ENCODE measurements at regions of chr1 and their contacts with region 1.

Region 1: DNA sequence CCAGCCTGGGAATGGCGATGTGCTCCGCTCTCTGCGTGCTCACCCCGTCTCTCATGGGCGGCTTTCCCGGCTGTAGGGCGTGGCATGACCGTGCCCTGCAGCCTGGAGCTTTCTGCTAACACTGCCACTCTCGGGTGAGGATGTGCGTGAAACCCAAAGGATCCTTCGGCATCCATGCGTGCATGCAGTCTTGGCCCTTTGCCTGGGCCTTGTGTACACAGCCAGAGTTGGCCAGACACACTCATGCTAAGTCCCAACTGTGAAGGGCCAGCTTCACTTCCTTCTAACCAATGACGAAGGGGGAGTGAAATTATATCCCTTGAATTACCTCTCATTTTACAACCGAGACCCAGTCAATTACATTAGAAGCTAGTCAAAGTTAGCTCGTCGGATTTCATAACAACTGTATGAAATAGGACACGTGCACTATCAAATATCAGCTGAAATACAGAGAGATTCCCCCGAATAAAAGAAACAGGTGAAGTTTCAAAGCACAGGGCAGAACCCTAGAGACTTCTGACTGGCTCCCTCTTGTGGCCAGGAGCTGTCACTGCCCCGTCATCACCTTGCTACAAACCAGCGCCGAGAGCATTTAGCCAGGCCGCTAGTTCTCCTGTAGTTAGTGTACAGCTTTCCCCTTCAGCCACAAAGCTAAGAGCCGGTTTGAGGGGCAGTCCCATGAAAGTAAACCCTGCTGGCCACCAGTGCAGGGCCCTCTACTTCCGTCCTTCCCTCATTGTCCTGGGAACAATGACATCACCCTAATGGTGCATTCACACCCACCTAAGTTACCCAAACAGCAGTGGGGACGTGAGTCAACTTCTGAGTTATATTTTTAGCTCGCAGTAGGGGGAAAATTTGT is 63.4 kb upstream of the COA6 start:
- DNase-seq: no peak
- ATAC-seq: peak; percentile 93
- H3K4me3 ChIP-seq: no peak overlapping the region
- H3K27ac ChIP-seq: no peak overlapping the region
- H3K4me1 ChIP-seq: peaks cover 10% of the 10 kb centered on the region
- H3K27me3 ChIP-seq: no peaks in the 10 kb centered on the region; a peak in 1 of 4 replicates
- CTCF ChIP-seq: peak; percentile 88 to 93 (median 91)
- EP300 ChIP-seq: no peak
- POLR2A ChIP-seq: no peak
- RAD21 ChIP-seq: peak; percentile 80

Region 2: GRCh38 chr1:233613252-233614174 is 696.3 kb before region 1 on chr1 and contains the start of gene KCNK1:
- CTCF ChIA-PET with region 1: no interaction called
- POLR2A ChIA-PET with region 1: no interaction called
- RAD21 ChIA-PET with region 1: no interaction called
- SMC1A ChIA-PET with region 1: no interaction called
- in situ Hi-C with region 1: no loop called
- intact Hi-C with region 1: no loop called
- DNase-seq: no peak
- ATAC-seq: peak; percentile 51
- H3K4me3 ChIP-seq: peak within 1 kb of the TSS; percentile 81
- H3K27ac ChIP-seq: peak within 1 kb of the TSS; percentile 76
- H3K4me1 ChIP-seq: peaks cover 9% of the 10 kb centered on the region
- H3K27me3 ChIP-seq: no peaks in the 10 kb centered on the region
- CTCF ChIP-seq: no peak
- EP300 ChIP-seq: no peak
- POLR2A ChIP-seq: no peak
- RAD21 ChIP-seq: no peak
- polyA plus RNA-seq, gene KCNK1: 9.4 to 14.6 TPM

Region 3: GRCh38 chr1:234114648-234115307 is 195.1 kb before region 1 on chr1:
- CTCF ChIA-PET with region 1: interaction called, 64 read pairs
- POLR2A ChIA-PET with region 1: no interaction called
- RAD21 ChIA-PET with region 1: interaction called, 11 read pairs
- SMC1A ChIA-PET with region 1: interaction called, 15 read pairs
- in situ Hi-C with region 1: no loop called
- intact Hi-C with region 1: loop called (anchors 5 kb)
- DNase-seq: peak; percentile 4
- ATAC-seq: peak; percentile 77
- H3K4me3 ChIP-seq: no peak overlapping the region
- H3K27ac ChIP-seq: no peak overlapping the region
- H3K4me1 ChIP-seq: no peaks in the 10 kb centered on the region
- H3K27me3 ChIP-seq: peaks cover 0 to 3% of the 10 kb centered on the region in 2 experiments; a peak in 1 of 4 replicates
- CTCF ChIP-seq: peak; percentile 60 to 74 (median 60); a peak in 5 of 6 replicates
- EP300 ChIP-seq: no peak
- POLR2A ChIP-seq: no peak
- RAD21 ChIP-seq: peak; percentile 72

Region 4: GRCh38 chr1:234154320-234155251 is 155.2 kb before region 1 on chr1:
- CTCF ChIA-PET with region 1: interaction called, 39 read pairs
- POLR2A ChIA-PET with region 1: no interaction called
- RAD21 ChIA-PET with region 1: interaction called, 10 read pairs
- SMC1A ChIA-PET with region 1: interaction called, 21 read pairs
- in situ Hi-C with region 1: loop called (anchors 5 kb)
- intact Hi-C with region 1: loop called (anchors 1 kb)
- DNase-seq: peak; percentile 20
- ATAC-seq: peak; percentile 86
- H3K4me3 ChIP-seq: no peak overlapping the region
- H3K27ac ChIP-seq: no peak overlapping the region
- H3K4me1 ChIP-seq: no peaks in the 10 kb centered on the region
- H3K27me3 ChIP-seq: no peaks in the 10 kb centered on the region; a peak in 1 of 4 replicates
- CTCF ChIP-seq: peak; percentile 70 to 76 (median 71)
- EP300 ChIP-seq: no peak
- POLR2A ChIP-seq: no peak
- RAD21 ChIP-seq: peak; percentile 88

Region 5: GRCh38 chr1:234212764-234213657 is 96.8 kb before region 1 on chr1:
- CTCF ChIA-PET with region 1: interaction called, 312 read pairs
- POLR2A ChIA-PET with region 1: interaction called, 4 read pairs
- RAD21 ChIA-PET with region 1: interaction called, 84 read pairs
- SMC1A ChIA-PET with region 1: interaction called, 128 read pairs
- in situ Hi-C with region 1: loop called (anchors 25 kb)
- intact Hi-C with region 1: loop called (anchors 1 kb)
- DNase-seq: peak; percentile 28
- ATAC-seq: peak; percentile 55
- H3K4me3 ChIP-seq: no peak overlapping the region
- H3K27ac ChIP-seq: no peak overlapping the region
- H3K4me1 ChIP-seq: peaks cover 34% of the 10 kb centered on the region
- H3K27me3 ChIP-seq: no peaks in the 10 kb centered on the region
- CTCF ChIP-seq: peak; percentile 68 to 72 (median 68)
- EP300 ChIP-seq: no peak
- POLR2A ChIP-seq: no peak
- RAD21 ChIP-seq: peak; percentile 79

Region 6: DNA sequence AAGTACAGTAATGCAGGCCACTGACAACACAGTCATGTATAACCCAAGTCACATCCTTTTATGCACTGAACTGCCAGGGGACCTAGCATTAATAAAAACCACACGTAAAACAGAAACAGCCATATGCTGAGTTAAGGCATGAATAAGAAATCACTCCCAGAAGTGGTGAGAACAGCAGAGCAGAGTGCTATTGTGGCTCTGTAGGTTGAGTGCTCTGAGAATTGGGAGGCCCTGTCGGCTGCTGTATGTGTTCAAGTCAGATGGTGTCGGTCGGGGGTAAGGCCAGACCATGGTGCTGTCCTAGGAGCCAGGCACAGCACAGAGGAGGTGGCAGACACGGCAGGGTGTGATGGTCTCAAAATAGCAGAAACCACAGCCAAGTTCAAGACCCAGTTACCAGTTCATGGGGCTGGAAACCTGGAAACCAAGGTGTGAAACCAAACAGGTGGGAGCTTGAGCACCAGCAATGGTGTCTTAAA is 63.2 kb before region 1 on chr1:
- CTCF ChIA-PET with region 1: interaction called, 33 read pairs
- POLR2A ChIA-PET with region 1: no interaction called
- RAD21 ChIA-PET with region 1: interaction called, 9 read pairs
- SMC1A ChIA-PET with region 1: interaction called, 13 read pairs
- in situ Hi-C with region 1: no loop called
- intact Hi-C with region 1: loop called (anchors 2 kb)
- DNase-seq: peak; percentile 93
- ATAC-seq: peak; percentile 90
- H3K4me3 ChIP-seq: 0 out of 2 replicates have a peak overlapping the region, but pooled peaks have one; percentile 3
- H3K27ac ChIP-seq: peak overlapping the region; percentile 75
- H3K4me1 ChIP-seq: peaks cover 44% of the 10 kb centered on the region
- H3K27me3 ChIP-seq: no peaks in the 10 kb centered on the region
- CTCF ChIP-seq: no peak
- EP300 ChIP-seq: peak in 1 of 2 experiments; percentile 7; a peak in 2 of 4 replicates
- POLR2A ChIP-seq: no peak
- RAD21 ChIP-seq: no peak

Region 7: GRCh38 chr1:234286206-234286605 is 23.6 kb before region 1 on chr1:
- CTCF ChIA-PET with region 1: interaction called, 13 read pairs
- POLR2A ChIA-PET with region 1: no interaction called
- RAD21 ChIA-PET with region 1: interaction called, 5 read pairs
- SMC1A ChIA-PET with region 1: interaction called, 7 read pairs
- in situ Hi-C with region 1: no loop called
- intact Hi-C with region 1: no loop called
- DNase-seq: no peak
- ATAC-seq: no peak
- H3K4me3 ChIP-seq: no peak overlapping the region
- H3K27ac ChIP-seq: no peak overlapping the region
- H3K4me1 ChIP-seq: no peaks in the 10 kb centered on the region
- H3K27me3 ChIP-seq: no peaks in the 10 kb centered on the region
- CTCF ChIP-seq: no peak
- EP300 ChIP-seq: no peak
- POLR2A ChIP-seq: no peak
- RAD21 ChIP-seq: no peak

Region 8: GRCh38 chr1:234326497-234327366 is 16.9 kb after region 1 on chr1:
- CTCF ChIA-PET with region 1: interaction called, 127 read pairs
- POLR2A ChIA-PET with region 1: no interaction called
- RAD21 ChIA-PET with region 1: interaction called, 9 read pairs
- SMC1A ChIA-PET with region 1: interaction called, 30 read pairs
- in situ Hi-C with region 1: no loop called
- intact Hi-C with region 1: no loop called
- DNase-seq: no peak
- ATAC-seq: peak; percentile 92
- H3K4me3 ChIP-seq: no peak overlapping the region
- H3K27ac ChIP-seq: no peak overlapping the region
- H3K4me1 ChIP-seq: peaks cover 5% of the 10 kb centered on the region
- H3K27me3 ChIP-seq: no peaks in the 10 kb centered on the region
- CTCF ChIP-seq: peak; percentile 77 to 87 (median 86)
- EP300 ChIP-seq: no peak
- POLR2A ChIP-seq: no peak
- RAD21 ChIP-seq: peak; percentile 76